ENCODE measurements at regions of chr1 and their contacts with region 1.

Region 1: DNA sequence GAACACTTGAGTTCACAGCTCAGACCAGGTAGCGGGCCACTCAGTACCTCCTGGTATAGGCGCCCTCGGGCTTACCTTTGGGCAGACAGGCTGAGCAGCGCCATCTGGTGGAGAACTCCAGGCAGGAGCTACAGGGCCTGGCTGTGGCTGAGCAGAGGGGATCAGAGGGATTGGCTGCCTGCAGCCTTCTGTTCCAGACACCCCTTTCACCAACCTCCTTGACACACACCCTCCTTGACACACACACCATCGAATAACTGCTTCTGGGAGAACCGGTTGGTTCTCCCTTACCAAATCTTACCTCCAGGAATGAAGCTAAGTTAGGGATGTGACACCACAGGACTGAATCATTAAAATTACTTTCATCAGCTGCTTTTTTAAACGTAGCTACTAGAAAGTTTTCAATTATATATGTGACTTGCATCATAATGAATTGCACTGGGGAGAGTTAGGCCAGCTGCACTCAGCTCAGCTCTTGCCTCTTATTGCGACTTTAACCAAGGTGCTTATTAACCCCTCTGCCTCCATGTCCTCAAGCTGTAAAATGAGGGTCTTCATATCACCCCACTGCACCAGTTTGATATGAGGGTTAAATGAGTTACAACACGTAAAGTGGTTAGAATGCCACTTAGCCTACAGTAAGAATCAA is 6.6 kb downstream of the LIN28A start:
- DNase-seq: peak; percentile 70 to 92 (median 85)
- ATAC-seq: peak; percentile 100
- H3K4me3 ChIP-seq: no peak overlapping the region
- H3K4me3 Mint-ChIP-seq: no peak overlapping the region
- H3K27ac ChIP-seq: no peak overlapping the region
- H3K27ac Mint-ChIP-seq: no peak overlapping the region
- H3K4me1 ChIP-seq: no peaks in the 10 kb centered on the region
- H3K4me1 Mint-ChIP-seq: no peaks in the 10 kb centered on the region
- H3K27me3 ChIP-seq: peaks cover 4 to 8% of the 10 kb centered on the region in 2 experiments
- H3K27me3 Mint-ChIP-seq: peaks cover 17% of the 10 kb centered on the region
- CTCF ChIP-seq: peak; percentile 79

Region 2: GRCh38 chr1:26111530-26112406 is 305.5 kb before region 1 on chr1 and contains the start of gene PDIK1L:
- CTCF ChIA-PET with region 1: no interaction called
- POLR2A ChIA-PET with region 1: no interaction called
- intact Hi-C with region 1: loop called in 1 of 2 experiments (anchors 5 kb)
- DNase-seq: peak; percentile 92 to 98 (median 94)
- ATAC-seq: peak; percentile 87
- H3K4me3 ChIP-seq: peak within 1 kb of the TSS; percentile 98 to 99
- H3K4me3 Mint-ChIP-seq: peak within 1 kb of the TSS; percentile 92
- H3K27ac ChIP-seq: peak within 1 kb of the TSS; percentile 65 to 79
- H3K27ac Mint-ChIP-seq: peak within 1 kb of the TSS; percentile 91
- H3K4me1 ChIP-seq: peaks cover 19% of the 10 kb centered on the region
- H3K4me1 Mint-ChIP-seq: peaks cover 30% of the 10 kb centered on the region
- H3K27me3 ChIP-seq: no peaks in the 10 kb centered on the region
- H3K27me3 Mint-ChIP-seq: no peaks in the 10 kb centered on the region
- CTCF ChIP-seq: no peak
- total RNA-seq, gene PDIK1L: 10.2 to 10.8 TPM

Region 3: DNA sequence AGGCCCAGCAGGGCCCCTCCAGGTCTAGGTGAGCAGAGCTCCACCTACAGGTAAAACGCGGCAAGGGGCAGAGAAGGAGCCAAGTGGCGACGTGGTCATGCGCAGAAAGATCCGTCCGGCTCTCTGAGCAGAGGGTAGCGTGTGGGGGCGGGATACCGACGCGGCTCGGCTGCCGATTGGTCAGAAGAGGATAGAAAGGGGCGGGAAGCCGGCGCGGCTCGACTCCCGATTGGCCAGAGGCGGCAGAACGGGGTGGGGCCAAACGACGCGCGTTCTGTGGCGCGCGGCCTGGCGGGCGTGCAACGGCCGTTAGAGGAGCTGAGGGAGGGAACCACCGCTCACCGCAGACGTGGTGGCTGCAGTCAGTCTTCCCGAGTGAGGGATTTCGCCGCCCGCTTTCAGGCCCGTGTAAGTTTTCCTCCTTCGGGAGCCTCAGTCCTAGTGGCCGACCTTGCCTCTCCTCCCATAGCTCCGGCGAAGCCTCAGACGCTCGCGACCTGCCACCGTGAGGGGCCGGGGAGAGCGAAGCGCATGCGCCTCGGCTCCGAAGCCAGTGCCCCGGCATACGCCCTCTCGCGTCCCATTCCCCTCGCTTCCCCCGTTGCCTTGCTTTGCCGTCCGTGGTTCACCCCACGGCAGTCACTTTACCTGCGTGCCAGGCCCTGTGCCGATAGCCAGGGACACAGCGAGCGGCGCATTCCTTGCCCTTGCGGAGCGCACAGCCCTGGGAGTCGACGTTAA is 183.2 kb before region 1 on chr1 and contains the start of gene CEP85:
- CTCF ChIA-PET with region 1: interaction called, 17 read pairs
- POLR2A ChIA-PET with region 1: interaction called, 3 read pairs
- intact Hi-C with region 1: no loop called
- DNase-seq: peak; percentile 96 to 99 (median 99)
- ATAC-seq: peak; percentile 90
- H3K4me3 ChIP-seq: peak within 1 kb of the TSS; percentile 87 to 95
- H3K4me3 Mint-ChIP-seq: peak within 1 kb of the TSS; percentile 99
- H3K27ac ChIP-seq: peak within 1 kb of the TSS; percentile 81 to 85
- H3K27ac Mint-ChIP-seq: peak within 1 kb of the TSS; percentile 95
- H3K4me1 ChIP-seq: peaks cover 17% of the 10 kb centered on the region
- H3K4me1 Mint-ChIP-seq: peaks cover 36% of the 10 kb centered on the region
- H3K27me3 ChIP-seq: no peaks in the 10 kb centered on the region
- H3K27me3 Mint-ChIP-seq: no peaks in the 10 kb centered on the region
- CTCF ChIP-seq: peak; percentile 72
- total RNA-seq, gene CEP85: 7.1 TPM

Region 4: DNA sequence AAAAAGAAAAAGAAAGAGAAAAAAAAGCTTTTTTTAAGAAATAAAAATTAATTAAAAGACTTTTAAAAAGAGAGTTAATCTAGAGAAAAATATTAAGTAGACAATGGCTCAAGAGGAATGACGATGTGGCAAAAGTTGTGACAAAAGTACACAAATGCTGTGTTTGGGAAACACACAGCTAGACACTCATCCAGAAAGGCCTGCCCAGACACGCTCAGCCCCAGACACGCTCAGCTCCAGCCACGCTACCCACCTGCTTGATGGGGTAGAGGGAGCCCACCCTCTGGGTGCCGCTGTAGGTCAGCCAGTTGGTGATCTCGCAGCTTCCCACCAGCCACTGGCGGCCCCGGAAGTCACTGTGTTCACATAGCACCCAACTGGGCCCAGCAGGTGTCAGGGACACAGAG is 89.3 kb before region 1 on chr1:
- CTCF ChIA-PET with region 1: interaction called, 19 read pairs
- POLR2A ChIA-PET with region 1: interaction called, 7 read pairs
- intact Hi-C with region 1: no loop called
- DNase-seq: no peak
- ATAC-seq: no peak
- H3K4me3 ChIP-seq: no peak overlapping the region
- H3K4me3 Mint-ChIP-seq: no peak overlapping the region
- H3K27ac ChIP-seq: no peak overlapping the region
- H3K27ac Mint-ChIP-seq: no peak overlapping the region
- H3K4me1 ChIP-seq: no peaks in the 10 kb centered on the region
- H3K4me1 Mint-ChIP-seq: peaks cover 11% of the 10 kb centered on the region
- H3K27me3 ChIP-seq: no peaks in the 10 kb centered on the region
- H3K27me3 Mint-ChIP-seq: no peaks in the 10 kb centered on the region
- CTCF ChIP-seq: no peak

Region 5: DNA sequence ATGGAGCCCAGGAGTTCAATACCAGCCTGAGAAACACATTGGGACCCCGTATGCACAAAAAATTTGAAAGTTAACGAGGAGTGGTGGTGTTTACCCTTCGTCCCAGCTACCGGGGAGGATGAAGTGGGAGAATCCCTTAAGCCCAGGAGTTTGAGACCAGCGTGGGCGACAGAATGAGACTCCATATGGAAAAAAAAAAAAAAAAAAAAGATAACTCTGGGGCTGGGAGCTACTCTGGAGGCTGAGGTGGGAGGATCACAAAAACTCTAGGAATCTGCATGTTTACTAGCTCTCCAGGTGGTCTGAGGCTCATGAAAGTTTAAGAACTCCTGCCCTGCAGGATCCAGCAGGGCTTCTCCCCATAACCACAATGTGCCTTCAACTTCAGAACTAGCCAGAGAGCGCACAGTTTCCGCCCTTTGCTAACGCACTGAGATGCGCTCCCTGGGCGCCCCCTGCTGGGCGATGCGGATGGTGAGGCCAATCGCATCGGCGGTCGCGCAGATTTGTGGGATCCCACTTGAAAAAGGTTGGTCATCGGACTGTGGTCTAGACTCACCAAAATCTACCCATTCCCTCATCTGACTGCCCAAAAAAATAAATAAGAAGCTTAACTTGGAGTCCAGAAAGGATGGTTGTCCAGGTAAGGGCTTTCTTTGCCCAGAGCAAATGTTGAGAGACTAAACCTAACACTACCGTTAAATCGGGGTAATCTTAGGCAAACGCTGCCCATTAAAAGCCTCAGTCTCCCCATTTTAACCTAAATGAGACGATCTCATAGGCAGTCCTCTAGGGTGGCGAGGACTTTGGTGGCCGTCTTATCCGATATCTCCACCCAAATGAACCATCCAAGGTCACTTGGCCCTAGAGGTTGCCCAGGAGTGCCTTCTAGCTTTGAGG is 53.4 kb before region 1 on chr1:
- CTCF ChIA-PET with region 1: interaction called, 70 read pairs
- POLR2A ChIA-PET with region 1: interaction called, 3 read pairs
- intact Hi-C with region 1: loop called in 1 of 2 experiments (anchors 1 kb)
- DNase-seq: peak; percentile 69 to 94 (median 86)
- ATAC-seq: peak; percentile 56
- H3K4me3 ChIP-seq: no peak overlapping the region
- H3K4me3 Mint-ChIP-seq: no peak overlapping the region
- H3K27ac ChIP-seq: no peak overlapping the region
- H3K27ac Mint-ChIP-seq: peak overlapping the region; percentile 66
- H3K4me1 ChIP-seq: peaks cover 56% of the 10 kb centered on the region
- H3K4me1 Mint-ChIP-seq: peaks cover 54% of the 10 kb centered on the region
- H3K27me3 ChIP-seq: peaks cover 0 to 16% of the 10 kb centered on the region in 2 experiments
- H3K27me3 Mint-ChIP-seq: peaks cover 13% of the 10 kb centered on the region
- CTCF ChIP-seq: peak; percentile 97

Region 6: DNA sequence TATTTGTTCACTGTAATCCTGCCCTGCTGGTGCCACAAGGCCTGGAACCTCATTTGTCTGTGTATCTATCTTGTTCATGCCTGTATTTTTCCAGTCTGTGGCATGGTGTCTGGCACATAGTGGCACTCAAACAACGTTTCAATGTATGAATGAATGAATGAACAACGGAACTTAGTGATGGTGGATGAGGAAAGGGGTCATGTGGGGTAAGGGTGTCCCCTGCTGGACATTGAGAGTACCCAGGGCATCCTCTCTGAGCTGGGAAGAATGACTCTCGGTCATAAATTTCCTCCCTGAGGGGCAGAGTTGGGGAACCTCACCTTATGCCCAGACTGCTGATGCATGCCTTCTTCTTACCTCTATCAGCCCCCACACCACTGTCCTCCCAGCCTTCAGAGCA is 25.8 kb before region 1 on chr1:
- CTCF ChIA-PET with region 1: interaction called, 61 read pairs
- POLR2A ChIA-PET with region 1: no interaction called
- intact Hi-C with region 1: no loop called
- DNase-seq: peak in 7 of 9 experiments; percentile 32 to 80 (median 51)
- ATAC-seq: peak; percentile 72
- H3K4me3 ChIP-seq: no peak overlapping the region
- H3K4me3 Mint-ChIP-seq: no peak overlapping the region
- H3K27ac ChIP-seq: no peak overlapping the region
- H3K27ac Mint-ChIP-seq: no peak overlapping the region
- H3K4me1 ChIP-seq: peaks cover 27% of the 10 kb centered on the region
- H3K4me1 Mint-ChIP-seq: peaks cover 30% of the 10 kb centered on the region
- H3K27me3 ChIP-seq: peaks cover 0 to 6% of the 10 kb centered on the region in 2 experiments
- H3K27me3 Mint-ChIP-seq: no peaks in the 10 kb centered on the region
- CTCF ChIP-seq: peak; percentile 44

Region 7: DNA sequence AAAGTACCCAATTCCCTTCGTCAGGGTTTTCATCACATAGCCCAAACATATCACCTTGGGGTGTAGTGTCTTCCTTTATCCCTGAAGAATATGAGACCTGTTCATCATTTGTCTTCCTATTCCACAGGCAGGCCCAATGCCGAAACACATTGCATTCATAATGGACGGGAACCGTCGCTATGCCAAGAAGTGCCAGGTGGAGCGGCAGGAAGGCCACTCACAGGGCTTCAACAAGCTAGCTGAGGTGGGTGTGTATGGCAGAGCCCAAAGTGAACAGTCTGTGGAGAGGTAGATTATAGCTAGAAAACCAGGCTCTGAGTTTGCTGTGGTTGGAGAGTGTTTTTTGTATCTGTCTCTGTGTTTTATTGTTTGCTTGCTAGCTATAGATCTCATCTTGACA is 20.8 kb after region 1 on chr1:
- CTCF ChIA-PET with region 1: interaction called, 18 read pairs
- POLR2A ChIA-PET with region 1: no interaction called
- intact Hi-C with region 1: no loop called
- DNase-seq: no peak
- ATAC-seq: no peak
- H3K4me3 ChIP-seq: no peak overlapping the region
- H3K4me3 Mint-ChIP-seq: no peak overlapping the region
- H3K27ac ChIP-seq: no peak overlapping the region
- H3K27ac Mint-ChIP-seq: no peak overlapping the region
- H3K4me1 ChIP-seq: peaks cover 5% of the 10 kb centered on the region
- H3K4me1 Mint-ChIP-seq: peaks cover 10% of the 10 kb centered on the region
- H3K27me3 ChIP-seq: no peaks in the 10 kb centered on the region
- H3K27me3 Mint-ChIP-seq: no peaks in the 10 kb centered on the region
- CTCF ChIP-seq: no peak

Region 8: GRCh38 chr1:26500488-26501175 is 83.4 kb after region 1 on chr1:
- CTCF ChIA-PET with region 1: no interaction called
- POLR2A ChIA-PET with region 1: no interaction called
- intact Hi-C with region 1: no loop called
- DNase-seq: peak; percentile 74 to 95 (median 89)
- ATAC-seq: peak; percentile 75
- H3K4me3 ChIP-seq: peak overlapping the region; percentile 67 to 96
- H3K4me3 Mint-ChIP-seq: peak overlapping the region; percentile 84
- H3K27ac ChIP-seq: peak overlapping the region; percentile 84 to 89
- H3K27ac Mint-ChIP-seq: peak overlapping the region; percentile 89
- H3K4me1 ChIP-seq: peaks cover 13% of the 10 kb centered on the region
- H3K4me1 Mint-ChIP-seq: peaks cover 15% of the 10 kb centered on the region
- H3K27me3 ChIP-seq: no peaks in the 10 kb centered on the region
- H3K27me3 Mint-ChIP-seq: no peaks in the 10 kb centered on the region
- CTCF ChIP-seq: peak; percentile 15

Measured in CD8-positive, alpha-beta T cell (primary cell).